ENCODE measurements at regions of chr7 and their contacts with region 1.

Region 1: GRCh38 chr7:12458520-12459131 is 55.0 kb upstream of the VWDE start:
- DNase-seq: no peak
- H3K4me3 Mint-ChIP-seq: no peak overlapping the region
- H3K27ac Mint-ChIP-seq: no peak overlapping the region
- H3K4me1 Mint-ChIP-seq: no peaks in the 10 kb centered on the region
- H3K27me3 Mint-ChIP-seq: peaks cover 2% of the 10 kb centered on the region

Region 2: GRCh38 chr7:12314199-12314598 is 144.4 kb before region 1 on chr7:
- CTCF ChIA-PET with region 1: no interaction called
- POLR2A ChIA-PET with region 1: no interaction called
- intact Hi-C with region 1: no loop called
- DNase-seq: no peak
- H3K4me3 Mint-ChIP-seq: no peak overlapping the region
- H3K27ac Mint-ChIP-seq: no peak overlapping the region
- H3K4me1 Mint-ChIP-seq: peaks cover 3% of the 10 kb centered on the region
- H3K27me3 Mint-ChIP-seq: no peaks in the 10 kb centered on the region

Region 3: GRCh38 chr7:12418452-12418851 is 40.2 kb before region 1 on chr7:
- CTCF ChIA-PET with region 1: interaction called, 11 read pairs
- POLR2A ChIA-PET with region 1: no interaction called
- intact Hi-C with region 1: no loop called
- DNase-seq: no peak
- H3K4me3 Mint-ChIP-seq: no peak overlapping the region
- H3K27ac Mint-ChIP-seq: no peak overlapping the region
- H3K4me1 Mint-ChIP-seq: no peaks in the 10 kb centered on the region
- H3K27me3 Mint-ChIP-seq: peaks cover 7% of the 10 kb centered on the region

Region 4: DNA sequence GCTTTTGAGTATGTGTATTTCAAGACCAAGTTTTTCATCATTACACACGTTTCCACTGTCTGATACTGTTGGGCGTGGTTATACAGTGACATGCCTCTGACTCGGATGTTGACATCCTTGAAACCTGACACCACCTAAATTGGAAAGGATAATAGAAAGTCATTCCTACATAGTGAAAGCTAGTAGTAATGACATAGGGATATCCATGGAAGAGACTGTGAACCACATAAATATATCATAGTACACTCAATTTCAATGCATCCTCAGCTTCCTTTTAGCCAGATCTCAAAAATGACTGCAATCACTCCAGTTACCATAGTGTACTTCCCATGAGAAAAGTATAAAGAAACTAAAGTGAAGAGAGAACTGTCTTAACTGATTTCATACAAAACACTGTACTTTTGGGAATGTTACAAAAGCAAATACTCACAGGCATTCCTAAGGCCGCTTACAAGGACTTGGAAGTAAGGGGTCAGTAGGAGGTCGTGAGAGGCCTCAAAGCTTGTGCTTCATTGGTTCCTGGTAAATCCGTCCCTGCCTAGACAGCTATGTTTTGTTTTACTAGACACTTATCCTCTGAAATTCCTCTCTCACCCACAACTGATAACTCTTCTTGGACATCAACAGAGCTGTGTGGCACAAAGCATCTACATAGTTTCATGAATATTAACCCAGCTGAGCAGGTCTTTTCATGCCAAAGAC is 16.9 kb after region 1 on chr7:
- CTCF ChIA-PET with region 1: interaction called, 13 read pairs
- POLR2A ChIA-PET with region 1: no interaction called
- intact Hi-C with region 1: no loop called
- DNase-seq: no peak
- H3K4me3 Mint-ChIP-seq: no peak overlapping the region
- H3K27ac Mint-ChIP-seq: no peak overlapping the region
- H3K4me1 Mint-ChIP-seq: no peaks in the 10 kb centered on the region
- H3K27me3 Mint-ChIP-seq: no peaks in the 10 kb centered on the region

Region 5: GRCh38 chr7:12490117-12490688 is 31.6 kb after region 1 on chr7:
- CTCF ChIA-PET with region 1: interaction called, 165 read pairs
- POLR2A ChIA-PET with region 1: no interaction called
- intact Hi-C with region 1: loop called (anchors 1 kb)
- DNase-seq: no peak
- H3K4me3 Mint-ChIP-seq: no peak overlapping the region
- H3K27ac Mint-ChIP-seq: no peak overlapping the region
- H3K4me1 Mint-ChIP-seq: no peaks in the 10 kb centered on the region
- H3K27me3 Mint-ChIP-seq: no peaks in the 10 kb centered on the region